ENCODE measurements at regions of chr15 and their contacts with region 1.

Region 1: DNA sequence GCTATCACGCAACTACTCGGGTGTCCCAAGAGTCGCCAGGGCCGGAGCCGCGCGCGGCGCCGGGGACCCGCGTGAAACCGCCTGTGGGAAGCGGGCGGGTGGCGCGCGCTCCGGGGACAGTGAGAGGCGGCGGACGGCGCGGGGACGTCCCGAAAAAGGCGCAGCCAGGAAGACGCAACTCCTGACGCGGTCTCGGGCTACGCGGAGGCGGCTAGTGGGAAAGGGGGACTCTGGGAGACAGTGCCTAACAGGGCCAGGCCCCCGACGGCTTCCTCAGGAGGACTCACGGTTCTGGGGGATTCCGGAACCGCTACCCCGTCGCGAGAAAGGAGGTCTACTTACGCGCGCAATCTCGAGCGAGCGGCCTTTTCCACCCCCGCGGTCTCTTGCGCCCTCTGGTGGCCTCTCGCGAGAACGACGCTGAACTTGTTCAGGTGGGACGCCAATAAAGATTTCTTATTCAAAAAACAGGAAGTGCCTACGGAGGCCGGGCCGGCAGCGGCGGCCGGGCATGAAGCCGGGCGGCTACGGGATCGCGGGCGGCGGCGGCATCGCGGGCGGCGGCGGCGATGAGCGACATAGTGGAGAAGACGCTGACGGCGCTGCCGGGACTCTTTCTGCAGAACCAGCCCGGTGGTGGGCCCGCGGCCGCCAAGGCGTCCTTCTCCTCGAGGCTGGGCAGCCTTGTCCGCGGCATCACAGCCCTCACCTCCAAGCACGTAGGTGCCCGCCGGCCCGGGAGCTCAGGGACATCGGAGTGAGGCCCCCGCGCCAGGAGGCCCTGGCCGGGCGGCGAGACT is at the start of gene AP4E1:
- DNase-seq: peak; percentile 96
- H3K4me3 Mint-ChIP-seq: peak within 1 kb of the TSS; percentile 93
- H3K27ac Mint-ChIP-seq: peak within 1 kb of the TSS; percentile 98
- H3K4me1 Mint-ChIP-seq: peaks cover 22% of the 10 kb centered on the region
- H3K27me3 Mint-ChIP-seq: no peaks in the 10 kb centered on the region
- total RNA-seq, gene AP4E1: 12.0 to 12.7 TPM

Region 2: DNA sequence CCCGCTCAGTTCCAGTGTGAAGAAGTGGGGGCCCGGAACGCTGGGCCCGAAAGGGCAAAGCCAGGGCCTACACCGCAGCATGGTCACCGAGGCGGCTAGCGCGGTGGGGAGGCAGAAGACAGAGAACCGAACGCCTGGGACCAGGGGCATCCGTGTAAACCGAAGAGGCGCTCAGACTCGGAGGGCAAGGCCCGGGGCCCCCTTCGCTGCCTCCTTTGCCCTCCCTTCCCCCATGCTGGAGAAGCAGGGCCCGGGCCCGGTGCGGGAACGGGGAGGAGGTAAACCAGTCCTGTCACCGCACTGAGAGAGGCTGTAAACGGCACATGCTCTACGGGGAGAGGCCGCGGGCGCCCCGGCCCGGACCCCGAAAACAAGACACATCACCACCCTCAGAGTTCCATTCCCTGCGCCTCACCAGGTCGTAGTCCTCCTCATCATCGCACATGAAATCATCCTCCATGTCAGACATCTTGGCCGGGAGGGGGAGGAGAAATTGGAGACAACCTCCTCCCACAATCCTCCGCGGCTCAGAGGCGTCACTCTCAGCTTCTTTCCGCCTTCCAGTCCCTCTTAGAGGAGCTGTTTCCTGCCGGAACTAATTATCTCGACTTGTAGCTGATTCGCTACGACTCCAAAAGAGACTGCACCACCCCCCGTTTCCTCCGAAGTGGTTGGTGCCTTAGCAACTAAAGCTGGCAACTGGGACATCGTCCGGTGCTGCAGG is 1753.1 kb before region 1 on chr15 and contains the start of gene COPS2:
- CTCF ChIA-PET with region 1: no interaction called
- POLR2A ChIA-PET with region 1: interaction called, 3 read pairs
- intact Hi-C with region 1: loop called (anchors 10 kb)
- DNase-seq: peak; percentile 97
- H3K4me3 Mint-ChIP-seq: peak within 1 kb of the TSS; percentile 99
- H3K27ac Mint-ChIP-seq: peak within 1 kb of the TSS; percentile 97
- H3K4me1 Mint-ChIP-seq: peaks cover 50% of the 10 kb centered on the region
- H3K27me3 Mint-ChIP-seq: no peaks in the 10 kb centered on the region
- total RNA-seq, gene COPS2: 79.8 to 80.0 TPM

Region 3: DNA sequence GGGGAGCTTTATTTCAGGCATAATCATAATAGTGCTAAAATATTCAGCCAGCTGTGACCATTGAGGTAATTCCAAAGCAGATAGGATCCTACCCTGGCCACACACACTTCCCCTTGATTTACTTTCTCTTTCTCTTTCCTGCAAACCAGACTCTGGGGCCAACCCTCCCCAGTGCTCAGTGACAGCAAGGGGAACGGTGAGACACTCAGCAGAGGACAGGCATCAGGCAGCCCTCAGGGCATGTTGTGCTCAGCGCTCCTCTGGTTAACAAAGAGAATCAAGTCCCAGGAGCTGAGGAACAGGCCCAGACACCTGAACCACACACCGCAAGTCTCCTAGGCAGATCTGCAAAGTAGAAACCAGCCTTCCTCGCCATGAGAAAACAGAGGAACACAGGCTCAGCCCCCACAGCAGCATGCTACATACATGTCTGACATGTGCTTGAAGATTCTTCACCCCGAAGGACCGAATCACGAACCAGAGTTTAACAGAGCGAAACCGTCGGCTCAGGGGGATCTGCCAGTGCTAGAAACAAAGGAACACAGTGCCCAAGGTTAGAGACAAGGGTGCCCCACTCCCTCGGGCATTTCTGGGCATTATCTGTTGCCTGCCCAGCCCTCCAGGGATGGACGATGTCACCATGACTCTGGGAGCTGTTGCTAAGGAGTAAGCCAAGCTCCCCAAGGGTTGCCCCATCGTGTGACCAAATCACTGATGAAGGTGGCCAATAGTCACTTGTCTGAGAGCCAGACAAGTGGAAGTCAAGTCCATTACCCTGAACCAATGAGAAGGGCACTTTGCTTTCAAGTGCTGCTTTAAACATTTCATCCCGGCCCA is 660.4 kb before region 1 on chr15:
- CTCF ChIA-PET with region 1: no interaction called
- POLR2A ChIA-PET with region 1: no interaction called
- intact Hi-C with region 1: loop called (anchors 5 kb)
- DNase-seq: peak; percentile 82
- H3K4me3 Mint-ChIP-seq: peak overlapping the region; percentile 75
- H3K27ac Mint-ChIP-seq: peak overlapping the region; percentile 97
- H3K4me1 Mint-ChIP-seq: peaks cover 35% of the 10 kb centered on the region
- H3K27me3 Mint-ChIP-seq: no peaks in the 10 kb centered on the region

Region 4: DNA sequence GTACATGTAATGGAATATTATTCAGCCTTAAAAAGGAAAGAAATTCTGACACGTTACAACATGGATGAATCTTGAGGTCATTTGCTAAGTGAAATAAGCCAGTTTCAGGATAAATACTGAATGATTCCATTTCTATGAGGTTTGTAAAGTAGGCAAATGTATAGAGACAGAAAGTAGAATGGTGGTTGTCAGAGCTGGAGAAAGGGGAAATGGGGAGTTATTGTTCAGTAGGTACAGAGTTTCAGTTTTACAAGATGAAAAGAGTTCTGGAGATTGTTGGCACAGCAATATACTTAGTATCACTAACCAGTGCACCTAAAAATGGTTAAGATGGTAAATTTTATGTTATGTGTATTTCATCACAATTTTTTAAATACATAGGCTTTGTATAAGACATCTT is 423.6 kb before region 1 on chr15:
- CTCF ChIA-PET with region 1: no interaction called
- POLR2A ChIA-PET with region 1: no interaction called
- intact Hi-C with region 1: loop called (anchors 5 kb)
- DNase-seq: no peak
- H3K4me3 Mint-ChIP-seq: no peak overlapping the region
- H3K27ac Mint-ChIP-seq: no peak overlapping the region
- H3K4me1 Mint-ChIP-seq: peaks cover 29% of the 10 kb centered on the region
- H3K27me3 Mint-ChIP-seq: no peaks in the 10 kb centered on the region

Region 5: DNA sequence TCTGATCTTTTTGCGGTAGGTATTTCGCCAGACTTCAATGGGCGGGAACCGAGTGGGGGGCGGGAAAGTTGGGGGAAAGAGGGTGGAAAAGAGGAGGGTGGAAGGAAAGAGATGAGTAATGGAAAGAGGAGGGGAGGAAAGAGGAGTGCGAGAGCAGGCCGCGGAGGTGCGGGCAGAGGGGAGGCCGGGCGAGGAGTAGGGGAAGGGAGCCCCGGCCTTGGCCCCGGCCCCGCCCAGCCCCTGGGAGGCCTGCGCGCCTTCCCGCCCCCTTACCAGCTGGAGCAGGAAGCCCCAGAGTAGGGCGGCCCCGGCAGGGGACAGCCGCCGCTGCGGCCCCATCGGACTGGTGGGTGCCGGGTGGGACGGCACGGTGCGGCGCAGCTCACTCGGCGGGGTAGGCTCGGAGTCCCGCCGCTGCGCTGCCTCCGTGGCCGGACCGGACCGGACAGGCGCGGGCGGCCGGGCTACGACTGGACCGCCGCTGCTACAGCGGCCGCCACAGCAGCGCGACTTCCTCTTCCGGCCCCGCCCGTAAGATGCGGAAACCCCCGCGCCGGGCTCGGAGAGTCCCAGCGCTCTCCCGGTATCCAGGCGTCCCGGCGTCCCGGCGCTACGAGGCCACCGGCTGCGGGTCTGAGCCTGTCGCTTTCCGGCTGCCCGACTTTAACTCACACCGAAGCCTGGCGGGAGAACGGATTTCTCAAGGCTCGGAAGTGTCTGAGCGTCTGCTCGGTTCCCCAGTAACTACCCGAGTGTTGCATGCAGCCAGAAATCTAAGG is 143.0 kb before region 1 on chr15 and contains the start of gene SPPL2A:
- CTCF ChIA-PET with region 1: interaction called, 5 read pairs
- POLR2A ChIA-PET with region 1: interaction called, 14 read pairs
- intact Hi-C with region 1: loop called (anchors 1 kb)
- DNase-seq: peak; percentile 94
- H3K4me3 Mint-ChIP-seq: peak within 1 kb of the TSS; percentile 92
- H3K27ac Mint-ChIP-seq: peak within 1 kb of the TSS; percentile 93
- H3K4me1 Mint-ChIP-seq: peaks cover 56% of the 10 kb centered on the region
- H3K27me3 Mint-ChIP-seq: no peaks in the 10 kb centered on the region
- total RNA-seq, gene SPPL2A: 79.9 to 82.1 TPM

Region 6: GRCh38 chr15:51737280-51738017 is 829.0 kb after region 1 on chr15 and contains the start of gene LYSMD2:
- CTCF ChIA-PET with region 1: no interaction called
- POLR2A ChIA-PET with region 1: no interaction called
- intact Hi-C with region 1: loop called (anchors 5 kb)
- DNase-seq: peak; percentile 79
- H3K4me3 Mint-ChIP-seq: peak within 1 kb of the TSS; percentile 81
- H3K27ac Mint-ChIP-seq: peak within 1 kb of the TSS; percentile 85
- H3K4me1 Mint-ChIP-seq: peaks cover 55% of the 10 kb centered on the region
- H3K27me3 Mint-ChIP-seq: no peaks in the 10 kb centered on the region
- total RNA-seq, gene LYSMD2: 18.1 to 18.6 TPM